Ascending aorta (tissue), 2 donors: ENCODE measurements at regions of chr17 and their contacts with region 1.

Region 1: GRCh38 chr17:8409966-8410864 is 12.6 kb upstream of the RNF222 start:
- DNase-seq: peak; percentile 31 to 93
- H3K4me3 ChIP-seq: no peak overlapping the region
- H3K27ac ChIP-seq: no peak overlapping the region
- H3K4me1 ChIP-seq: no peaks in the 10 kb centered on the region
- H3K27me3 ChIP-seq: no peaks in the 10 kb centered on the region
- CTCF ChIP-seq: peak; percentile 75 to 84 (median 77)

Region 2: DNA sequence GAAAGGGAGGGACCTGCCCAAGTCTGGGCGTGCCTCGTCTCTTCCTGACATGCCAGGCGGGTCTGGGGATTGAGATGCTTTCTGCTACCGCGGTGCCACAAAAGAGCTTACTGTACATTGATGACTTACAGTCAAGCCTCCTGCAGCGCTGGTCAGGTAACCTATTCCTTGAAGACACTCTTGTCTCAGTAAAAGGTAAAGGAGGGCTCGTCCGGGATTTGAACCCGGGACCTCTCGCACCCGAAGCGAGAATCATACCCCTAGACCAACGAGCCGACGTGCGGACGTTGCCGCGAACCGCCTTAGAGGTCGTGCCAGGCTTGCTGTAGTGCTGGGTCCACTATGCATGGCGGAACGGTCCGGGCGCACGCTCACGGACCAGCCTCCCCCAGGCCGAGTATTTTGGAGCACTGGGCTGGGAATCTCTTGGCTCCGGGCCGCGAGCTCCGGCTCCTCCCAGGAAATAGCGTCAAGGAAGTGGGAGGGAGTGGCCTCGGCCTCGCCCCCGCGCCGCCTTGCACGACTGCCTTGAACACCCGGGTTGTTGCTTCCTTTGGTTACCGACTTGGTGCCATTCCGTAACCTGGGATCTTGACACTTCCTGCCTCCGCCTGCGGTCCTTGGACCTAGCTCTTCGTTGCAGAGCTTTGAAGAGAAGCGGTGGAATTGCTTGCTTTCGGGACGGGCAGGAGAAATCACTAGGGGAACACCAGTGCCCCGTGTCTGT is 187.4 kb before region 1 on chr17:
- intact Hi-C with region 1: no loop called
- DNase-seq: peak; percentile 79 to 97
- H3K4me3 ChIP-seq: peak overlapping the region; percentile 72 to 82
- H3K27ac ChIP-seq: peak overlapping the region; percentile 94 to 96
- H3K4me1 ChIP-seq: peaks cover 8 to 18% of the 10 kb centered on the region in 2 donors
- H3K27me3 ChIP-seq: no peaks in the 10 kb centered on the region
- CTCF ChIP-seq: no peak

Region 3: GRCh38 chr17:8435245-8436168 is 25.3 kb after region 1 on chr17 and contains the start of gene NDEL1:
- intact Hi-C with region 1: loop called (anchors 2 kb)
- DNase-seq: peak; percentile 96 to 99
- H3K4me3 ChIP-seq: peak within 1 kb of the TSS; percentile 73 to 96
- H3K27ac ChIP-seq: peak within 1 kb of the TSS; percentile 95 to 100
- H3K4me1 ChIP-seq: peaks cover 15 to 38% of the 10 kb centered on the region in 2 donors
- H3K27me3 ChIP-seq: no peaks in the 10 kb centered on the region
- CTCF ChIP-seq: no peak
- total RNA-seq, gene NDEL1: 103 TPM

Region 4: DNA sequence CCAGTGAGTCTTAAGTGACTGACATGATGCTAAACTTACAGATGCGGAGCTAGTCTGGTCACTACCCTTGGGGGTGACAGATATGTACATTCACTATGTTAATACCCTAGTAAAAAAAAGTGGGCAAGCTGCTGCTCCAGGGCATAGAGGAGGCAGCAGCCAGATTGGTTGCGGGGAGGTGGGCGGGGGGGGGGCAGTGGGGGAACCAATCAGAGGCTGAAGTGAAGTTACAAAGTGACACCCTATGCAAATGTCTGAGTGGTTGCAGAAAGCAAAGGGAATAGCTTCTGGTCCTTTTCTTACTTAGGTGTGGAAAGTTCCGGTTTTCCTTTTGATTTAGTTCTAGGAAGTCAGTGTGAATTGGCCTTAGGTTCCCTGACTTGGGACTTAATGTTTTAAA is 37.6 kb after region 1 on chr17:
- intact Hi-C with region 1: loop called (anchors 5 kb)
- DNase-seq: no peak
- H3K4me3 ChIP-seq: no peak overlapping the region
- H3K27ac ChIP-seq: no peak overlapping the region
- H3K4me1 ChIP-seq: no peaks in the 10 kb centered on the region
- H3K27me3 ChIP-seq: no peaks in the 10 kb centered on the region
- CTCF ChIP-seq: no peak

Region 5: GRCh38 chr17:8459107-8459506 is 48.9 kb after region 1 on chr17:
- intact Hi-C with region 1: no loop called
- DNase-seq: no peak
- H3K4me3 ChIP-seq: no peak overlapping the region
- H3K27ac ChIP-seq: no peak overlapping the region
- H3K4me1 ChIP-seq: peaks cover 6 to 20% of the 10 kb centered on the region in 2 donors
- H3K27me3 ChIP-seq: no peaks in the 10 kb centered on the region
- CTCF ChIP-seq: no peak

Region 6: DNA sequence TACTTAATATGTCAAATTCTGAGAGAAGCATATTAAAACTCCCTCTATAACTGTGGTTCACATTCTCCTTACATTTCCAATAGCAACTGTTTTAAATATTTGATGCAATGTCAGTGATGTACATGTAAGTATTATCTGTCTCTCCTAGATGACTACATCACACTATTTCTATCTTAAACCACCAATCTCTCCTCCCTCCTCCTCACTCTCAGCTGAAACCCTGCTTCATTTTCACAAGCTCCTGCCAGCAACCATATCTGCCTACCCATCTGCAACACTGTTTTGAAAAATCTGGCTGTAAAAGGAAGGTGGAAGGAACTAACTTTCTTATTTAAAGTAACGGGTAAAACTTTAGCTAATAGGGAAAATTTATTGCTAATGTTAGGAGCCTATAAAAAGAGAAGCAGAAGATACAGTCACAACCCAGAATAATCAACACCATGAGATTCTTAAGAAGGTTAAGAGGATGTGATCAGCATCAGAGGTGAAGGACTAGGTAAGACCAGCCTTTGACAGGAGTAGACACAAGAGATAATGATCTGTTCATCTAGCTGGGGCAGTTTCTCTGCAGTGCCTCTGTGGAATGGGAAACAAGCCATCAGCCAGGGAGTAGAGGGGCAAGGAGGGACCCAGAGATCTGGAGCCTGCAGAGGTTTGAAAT is 189.3 kb after region 1 on chr17:
- intact Hi-C with region 1: no loop called
- DNase-seq: no peak
- H3K4me3 ChIP-seq: peak overlapping the region in 1 of 2 donors; percentile 17
- H3K27ac ChIP-seq: peak overlapping the region; percentile 40 to 68
- H3K4me1 ChIP-seq: peaks cover 0 to 52% of the 10 kb centered on the region in 2 donors
- H3K27me3 ChIP-seq: no peaks in the 10 kb centered on the region
- CTCF ChIP-seq: no peak

Region 7: GRCh38 chr17:8785547-8786413 is 375.6 kb after region 1 on chr17:
- intact Hi-C with region 1: loop called (anchors 1 kb)
- DNase-seq: peak; percentile 36 to 93
- H3K4me3 ChIP-seq: peak overlapping the region in 1 of 2 donors; percentile 10
- H3K27ac ChIP-seq: peak overlapping the region; percentile 3 to 32
- H3K4me1 ChIP-seq: peaks cover 0 to 8% of the 10 kb centered on the region in 2 donors
- H3K27me3 ChIP-seq: no peaks in the 10 kb centered on the region
- CTCF ChIP-seq: peak; percentile 80 to 84 (median 80)